Activated B cell treated with CpG ODN at 0.5 μM for 24 hours (primary cell): ENCODE measurements at regions of chr2 and their contacts with region 1.

Region 1: GRCh38 chr2:30491225-30491624 is 44.2 kb downstream of the LCLAT1 start:
- DNase-seq: no peak
- ATAC-seq: no peak
- H3K4me3 Mint-ChIP-seq: no peak overlapping the region
- H3K27ac Mint-ChIP-seq: no peak overlapping the region
- H3K4me1 Mint-ChIP-seq: peaks cover 62% of the 10 kb centered on the region
- H3K27me3 Mint-ChIP-seq: no peaks in the 10 kb centered on the region
- CTCF ChIP-seq: no peak

Region 2: GRCh38 chr2:30503007-30503694 is 11.9 kb after region 1 on chr2:
- CTCF ChIA-PET with region 1: interaction called, 3 read pairs
- POLR2A ChIA-PET with region 1: interaction called, 4 read pairs
- intact Hi-C with region 1: loop called (anchors 2 kb)
- DNase-seq: no peak
- ATAC-seq: peak; percentile 65
- H3K4me3 Mint-ChIP-seq: peak overlapping the region; percentile 36
- H3K27ac Mint-ChIP-seq: peak overlapping the region; percentile 91
- H3K4me1 Mint-ChIP-seq: peaks cover 48% of the 10 kb centered on the region
- H3K27me3 Mint-ChIP-seq: no peaks in the 10 kb centered on the region
- CTCF ChIP-seq: no peak